ENCODE measurements at regions of chr14 and their contacts with region 1.

Region 1: GRCh38 chr14:69242311-69243224 is 17.4 kb upstream of the GALNT16 start:
- DNase-seq: peak in 1 of 2 donors; percentile 55
- ATAC-seq: peak; percentile 87
- H3K4me3 ChIP-seq: no peak overlapping the region
- H3K27ac ChIP-seq: no peak overlapping the region
- H3K4me1 ChIP-seq: peaks cover 0 to 3% of the 10 kb centered on the region in 2 donors
- H3K27me3 ChIP-seq: no peaks in the 10 kb centered on the region

Region 2: DNA sequence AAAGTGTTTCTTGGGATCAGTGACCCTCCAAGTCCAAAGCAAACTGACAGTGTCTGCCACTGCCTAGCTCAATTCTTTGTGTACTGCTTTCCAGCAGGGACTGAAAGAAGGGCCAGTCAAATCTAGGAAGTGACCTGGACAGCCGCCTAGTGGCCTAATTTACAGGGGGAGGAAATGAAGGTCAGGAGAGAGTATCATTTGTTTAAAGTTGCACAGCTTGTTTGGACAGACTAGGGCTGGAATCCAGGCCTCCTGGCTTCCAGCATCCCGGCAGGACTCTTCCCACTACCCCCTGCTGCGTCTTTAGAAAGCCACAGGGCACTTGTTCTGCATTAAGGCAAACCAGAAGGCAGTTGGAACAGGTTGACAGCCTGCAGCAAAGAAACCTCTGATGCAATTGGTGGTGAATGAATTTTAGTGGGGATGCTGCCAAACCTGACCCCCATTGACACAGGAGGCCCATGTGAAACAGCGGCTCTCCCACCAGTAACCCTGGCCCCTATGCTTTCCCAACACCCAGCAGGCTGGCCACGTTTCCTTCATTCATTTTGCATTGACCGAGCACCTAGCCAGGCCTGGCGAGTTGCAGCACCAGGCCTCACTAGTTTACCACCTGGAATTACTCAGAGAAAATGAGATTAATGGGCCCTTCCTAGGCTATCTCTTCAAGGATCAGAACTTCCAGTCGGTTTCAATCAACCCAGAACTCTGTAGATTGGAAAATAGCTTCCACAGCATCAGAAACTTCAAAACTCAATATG is 45.6 kb after region 1 on chr14:
- intact Hi-C with region 1: loop called (anchors 5 kb)
- DNase-seq: no peak
- ATAC-seq: peak; percentile 37
- H3K4me3 ChIP-seq: no peak overlapping the region
- H3K27ac ChIP-seq: no peak overlapping the region
- H3K4me1 ChIP-seq: no peaks in the 10 kb centered on the region
- H3K27me3 ChIP-seq: no peaks in the 10 kb centered on the region

Region 3: GRCh38 chr14:69354383-69355153 is 112.0 kb after region 1 on chr14:
- intact Hi-C with region 1: loop called in 1 of 2 experiments (anchors 5 kb)
- DNase-seq: no peak
- ATAC-seq: no peak
- H3K4me3 ChIP-seq: no peak overlapping the region
- H3K27ac ChIP-seq: no peak overlapping the region
- H3K4me1 ChIP-seq: no peaks in the 10 kb centered on the region
- H3K27me3 ChIP-seq: no peaks in the 10 kb centered on the region

Region 4: GRCh38 chr14:69363055-69363454 is 120.5 kb after region 1 on chr14:
- intact Hi-C with region 1: loop called (anchors 1 to 5 kb)
- DNase-seq: no peak
- ATAC-seq: peak; percentile 72
- H3K4me3 ChIP-seq: no peak overlapping the region
- H3K27ac ChIP-seq: no peak overlapping the region
- H3K4me1 ChIP-seq: no peaks in the 10 kb centered on the region
- H3K27me3 ChIP-seq: no peaks in the 10 kb centered on the region

Region 5: GRCh38 chr14:69460093-69460701 is 217.6 kb after region 1 on chr14:
- intact Hi-C with region 1: loop called (anchors 1 to 2 kb)
- DNase-seq: peak in 1 of 2 donors; percentile 70
- ATAC-seq: peak; percentile 91
- H3K4me3 ChIP-seq: no peak overlapping the region
- H3K27ac ChIP-seq: no peak overlapping the region
- H3K4me1 ChIP-seq: no peaks in the 10 kb centered on the region
- H3K27me3 ChIP-seq: no peaks in the 10 kb centered on the region

Measured in aorta (tissue), 5 donors.